Activated T-helper 1 cell treated with anti-CD3 and anti-CD28 coated beads, Interleukin-12 subunit alpha, Interleukin-12 subunit beta, Interleukin-2, Interleukin-4 antibody, amounts not matched to agents 30 ng/mL and 10 ng/mL and 1 ng/mL, durations not matched to agents 14 hours and 24 hours and 36 hours (primary cell): ENCODE measurements at regions of chr19 and their contacts with region 1.

Region 1: DNA sequence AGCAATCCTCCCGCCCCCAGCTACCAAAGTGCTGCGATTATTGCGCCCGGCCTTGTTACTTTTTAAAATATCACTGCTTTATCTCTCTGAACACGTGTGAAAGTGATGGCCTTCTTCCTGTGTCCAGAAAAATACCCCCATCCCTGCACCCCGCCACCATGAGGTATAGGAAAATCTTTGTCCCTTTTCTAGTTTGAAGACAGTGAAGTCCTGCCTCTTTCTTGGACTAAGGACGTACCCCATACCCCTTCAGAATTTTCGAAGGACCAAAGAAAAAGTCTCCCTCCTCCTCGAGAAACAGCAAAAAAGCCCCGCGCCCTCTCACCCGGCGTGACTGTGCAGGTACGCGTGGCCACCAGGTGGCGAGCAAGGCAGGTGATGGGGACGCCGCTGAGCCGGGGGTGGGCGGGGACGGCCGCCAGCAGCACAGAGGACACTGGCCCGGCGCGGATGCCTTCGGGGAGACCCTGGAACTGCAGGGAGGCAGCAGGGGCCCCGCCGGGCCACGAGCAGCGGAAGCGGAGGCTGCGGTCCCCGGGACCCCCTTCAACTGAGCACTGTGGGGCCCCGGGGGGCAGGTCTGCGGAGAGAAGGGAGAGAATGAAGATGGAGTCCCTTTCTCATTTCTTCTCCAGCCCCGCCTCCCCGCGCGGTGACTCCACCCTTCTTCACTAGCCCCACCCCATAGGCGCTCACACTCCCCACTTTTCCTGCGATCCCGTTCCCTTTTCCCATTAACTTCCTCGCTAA is 3.2 kb downstream of the VSIG10L start:
- DNase-seq: peak; percentile 80
- H3K4me3 Mint-ChIP-seq: peak overlapping the region; percentile 93
- H3K27ac Mint-ChIP-seq: peak overlapping the region; percentile 90
- H3K4me1 Mint-ChIP-seq: peaks cover 22% of the 10 kb centered on the region
- H3K27me3 Mint-ChIP-seq: peaks cover 6% of the 10 kb centered on the region

Region 2: GRCh38 chr19:51108066-51108804 is 230.5 kb before region 1 on chr19 and contains the start of gene CTU1:
- intact Hi-C with region 1: no loop called
- DNase-seq: peak; percentile 98
- H3K4me3 Mint-ChIP-seq: peak within 1 kb of the TSS; percentile 92
- H3K27ac Mint-ChIP-seq: peak within 1 kb of the TSS; percentile 96
- H3K4me1 Mint-ChIP-seq: peaks cover 24% of the 10 kb centered on the region
- H3K27me3 Mint-ChIP-seq: no peaks in the 10 kb centered on the region
- total RNA-seq, gene CTU1: 12.5 and 14.0 TPM in 2 replicates

Region 3: GRCh38 chr19:51219307-51219706 is 119.4 kb before region 1 on chr19:
- intact Hi-C with region 1: no loop called
- DNase-seq: no peak
- H3K4me3 Mint-ChIP-seq: no peak overlapping the region
- H3K27ac Mint-ChIP-seq: no peak overlapping the region
- H3K4me1 Mint-ChIP-seq: peaks cover 9% of the 10 kb centered on the region
- H3K27me3 Mint-ChIP-seq: peaks cover 12% of the 10 kb centered on the region

Region 4: DNA sequence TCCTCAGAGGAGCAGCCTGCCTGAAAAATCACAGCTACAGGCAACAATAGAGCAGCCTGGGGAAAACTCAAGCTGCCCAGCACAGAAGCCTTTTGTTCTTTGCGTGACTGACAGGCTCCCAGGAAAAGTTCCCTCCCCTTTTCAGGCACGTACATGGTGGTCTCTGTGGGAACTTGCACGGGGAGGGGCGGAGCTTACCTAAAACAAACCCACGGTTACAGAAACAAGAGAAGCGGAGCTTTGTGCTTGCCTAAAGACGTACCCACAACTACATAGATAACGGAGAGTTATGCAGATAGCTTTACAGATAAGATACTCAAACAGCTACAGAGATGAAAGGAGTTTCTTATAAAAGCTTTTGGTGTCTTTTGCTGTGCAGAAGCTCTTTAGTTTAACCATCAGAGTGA is 16.0 kb after region 1 on chr19:
- intact Hi-C with region 1: no loop called
- DNase-seq: no peak
- H3K4me3 Mint-ChIP-seq: no peak overlapping the region
- H3K27ac Mint-ChIP-seq: peak overlapping the region; percentile 80
- H3K4me1 Mint-ChIP-seq: peaks cover 28% of the 10 kb centered on the region
- H3K27me3 Mint-ChIP-seq: no peaks in the 10 kb centered on the region

Region 5: GRCh38 chr19:51367565-51368365 is 29.0 kb after region 1 on chr19:
- intact Hi-C with region 1: loop called (anchors 1 kb)
- DNase-seq: peak; percentile 95
- H3K4me3 Mint-ChIP-seq: peak overlapping the region; percentile 98
- H3K27ac Mint-ChIP-seq: peak overlapping the region; percentile 96
- H3K4me1 Mint-ChIP-seq: peaks cover 68% of the 10 kb centered on the region
- H3K27me3 Mint-ChIP-seq: no peaks in the 10 kb centered on the region

Region 6: GRCh38 chr19:51407511-51408131 is 68.9 kb after region 1 on chr19:
- intact Hi-C with region 1: loop called (anchors 1 kb)
- DNase-seq: peak; percentile 12
- H3K4me3 Mint-ChIP-seq: no peak overlapping the region
- H3K27ac Mint-ChIP-seq: no peak overlapping the region
- H3K4me1 Mint-ChIP-seq: peaks cover 7% of the 10 kb centered on the region
- H3K27me3 Mint-ChIP-seq: peaks cover 1% of the 10 kb centered on the region

Region 7: DNA sequence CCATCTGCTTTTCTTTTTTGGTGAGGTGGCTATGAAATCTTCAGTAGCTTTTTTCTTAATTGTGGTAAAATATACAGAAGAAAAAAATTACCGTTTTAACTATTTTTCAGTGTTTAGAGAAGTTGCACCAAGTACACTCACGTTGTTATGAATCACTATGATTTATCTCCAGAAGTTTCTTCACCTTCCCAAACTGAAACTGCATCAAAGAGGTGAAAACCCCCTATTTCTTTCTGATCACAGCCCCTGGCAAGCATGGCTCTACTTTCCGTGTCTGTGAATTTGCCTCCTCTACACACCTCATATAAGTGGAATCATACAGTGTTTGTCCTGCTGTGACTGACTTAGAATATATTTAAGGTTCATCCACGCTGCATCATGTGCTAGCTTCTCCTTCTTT is 94.3 kb after region 1 on chr19:
- intact Hi-C with region 1: no loop called
- DNase-seq: no peak
- H3K4me3 Mint-ChIP-seq: no peak overlapping the region
- H3K27ac Mint-ChIP-seq: no peak overlapping the region
- H3K4me1 Mint-ChIP-seq: peaks cover 13% of the 10 kb centered on the region
- H3K27me3 Mint-ChIP-seq: peaks cover 48% of the 10 kb centered on the region

Region 8: GRCh38 chr19:51593969-51594773 is 255.4 kb after region 1 on chr19:
- intact Hi-C with region 1: loop called (anchors 1 kb)
- DNase-seq: peak; percentile 95
- H3K4me3 Mint-ChIP-seq: peak overlapping the region; percentile 92
- H3K27ac Mint-ChIP-seq: peak overlapping the region; percentile 78
- H3K4me1 Mint-ChIP-seq: peaks cover 20% of the 10 kb centered on the region
- H3K27me3 Mint-ChIP-seq: no peaks in the 10 kb centered on the region

Region 9: DNA sequence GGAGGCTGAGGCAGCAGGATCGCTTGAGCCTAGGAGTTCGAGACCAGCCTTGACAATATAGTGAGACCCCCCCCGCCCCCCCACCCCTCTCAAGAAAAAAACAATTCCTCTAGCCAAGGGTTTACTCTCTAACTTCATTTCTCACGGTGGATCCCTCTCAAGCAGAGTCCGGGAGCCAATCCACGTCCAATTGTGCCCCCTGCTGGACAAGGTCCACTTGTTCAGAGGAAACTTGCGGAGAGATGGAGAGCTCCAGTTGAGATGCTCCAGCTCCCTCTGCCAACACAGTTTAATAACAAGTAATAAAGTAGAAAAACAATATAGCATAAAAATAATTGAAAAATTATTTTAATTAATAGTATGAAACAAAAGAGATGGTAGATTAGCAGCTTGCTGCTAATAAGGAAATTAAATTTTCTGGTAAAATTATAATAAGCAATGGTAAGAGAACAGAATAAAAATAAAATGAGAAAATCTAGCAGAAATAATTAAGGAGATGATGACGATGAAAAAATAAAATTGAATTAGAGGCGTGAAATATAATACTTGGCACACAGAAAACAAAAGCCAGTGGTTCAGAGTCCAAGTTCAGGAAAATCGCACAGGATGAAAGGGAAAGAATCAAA is 322.4 kb after region 1 on chr19:
- intact Hi-C with region 1: loop called (anchors 1 kb)
- DNase-seq: no peak
- H3K4me3 Mint-ChIP-seq: no peak overlapping the region
- H3K27ac Mint-ChIP-seq: no peak overlapping the region
- H3K4me1 Mint-ChIP-seq: peaks cover 6% of the 10 kb centered on the region
- H3K27me3 Mint-ChIP-seq: peaks cover 14% of the 10 kb centered on the region